Psoas muscle (tissue), 8 donors: ENCODE measurements at regions of chr3 and their contacts with region 1.

Region 1: DNA sequence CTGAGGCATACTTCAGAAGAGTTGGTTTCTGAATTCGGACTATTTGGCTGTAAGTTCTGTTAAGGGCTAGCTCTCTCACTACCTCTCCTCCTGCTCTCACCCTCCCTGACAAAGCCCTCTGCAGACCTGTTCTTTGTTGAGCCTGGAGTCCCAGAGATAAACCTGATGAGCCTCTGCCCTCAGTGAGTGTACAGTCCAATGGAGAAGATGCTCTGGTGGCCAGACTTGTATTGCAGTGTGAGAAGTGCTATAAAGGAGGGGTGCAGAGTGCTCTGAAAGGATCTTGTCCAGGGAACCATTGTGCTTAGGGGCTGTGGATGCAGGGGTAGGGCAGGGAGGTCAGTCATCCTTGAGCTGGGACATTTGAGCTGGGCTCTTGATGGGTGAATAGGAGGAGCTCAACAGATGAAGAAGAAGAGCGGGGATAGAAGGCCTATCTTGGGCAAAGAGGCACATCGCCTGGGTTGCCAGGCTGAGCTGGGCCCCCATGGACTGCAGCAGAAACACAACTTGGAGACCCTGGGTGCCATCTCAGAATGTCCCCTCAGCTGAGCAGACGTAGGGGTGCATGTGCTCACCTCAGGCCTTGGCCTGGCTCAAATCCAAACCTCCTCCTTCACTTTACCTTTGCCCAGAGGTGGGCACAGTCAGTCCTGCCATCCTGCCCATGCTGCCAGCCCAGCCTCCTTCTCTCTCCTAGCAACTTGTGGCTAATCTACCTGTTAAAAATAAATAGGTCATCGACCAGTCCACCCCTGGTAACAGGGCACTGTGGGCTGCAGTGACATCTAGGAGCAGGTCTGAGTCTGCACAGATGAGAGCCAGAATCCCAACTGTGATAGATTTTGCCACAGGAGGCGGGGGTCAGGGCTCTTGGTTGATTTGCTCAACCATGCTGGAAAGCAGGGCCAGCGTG is 3.3 kb downstream of the CAND2 start:
- DNase-seq: no peak
- ATAC-seq: no peak
- H3K4me3 ChIP-seq: peak overlapping the region; percentile 84
- H3K27ac ChIP-seq: peak overlapping the region; percentile 95
- H3K4me1 ChIP-seq: peaks cover 39% of the 10 kb centered on the region
- H3K27me3 ChIP-seq: no peaks in the 10 kb centered on the region
- CTCF ChIP-seq: no peak

Region 2: DNA sequence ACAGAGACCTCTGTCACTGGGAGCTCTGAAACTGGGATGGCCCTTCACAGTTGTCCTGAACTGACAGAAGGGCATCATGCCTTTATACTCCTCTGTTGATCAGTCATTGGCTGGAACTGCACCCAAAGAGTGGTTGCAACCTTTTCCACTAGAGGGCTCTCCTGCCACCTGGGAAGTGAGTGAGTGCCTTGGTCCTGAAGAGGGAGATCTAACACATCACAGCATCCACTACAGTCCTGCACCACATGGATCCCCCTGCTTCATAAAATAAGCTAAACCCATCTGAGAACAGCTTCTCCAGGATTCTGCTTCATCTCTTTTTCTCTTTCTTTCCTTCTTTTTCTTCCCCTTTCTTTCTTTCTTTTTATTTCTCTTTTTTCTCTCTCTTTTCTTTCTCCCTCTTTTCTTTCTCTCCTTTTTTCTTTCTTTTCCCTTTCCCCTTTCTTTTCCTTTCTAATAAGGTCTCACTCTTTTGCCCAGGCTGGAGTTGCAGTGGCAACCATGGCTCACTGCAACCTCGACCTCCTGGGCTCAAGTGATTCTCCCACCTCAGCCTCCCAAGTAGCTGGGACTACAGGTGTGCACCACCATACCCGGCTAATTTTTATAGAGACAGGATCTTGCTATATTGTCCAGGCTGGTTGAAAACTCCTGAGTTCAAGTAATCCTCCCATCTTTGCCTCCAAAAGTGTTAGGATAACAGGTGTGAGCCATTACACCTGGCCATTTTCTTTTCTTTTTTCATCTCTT is 93.1 kb before region 1 on chr3:
- intact Hi-C with region 1: loop called in 1 of 2 experiments (anchors 2 kb)
- DNase-seq: peak; percentile 31 to 58
- ATAC-seq: peak; percentile 84 to 93 (median 87)
- H3K4me3 ChIP-seq: no peak overlapping the region
- H3K27ac ChIP-seq: peak overlapping the region; percentile 21
- H3K4me1 ChIP-seq: peaks cover 11% of the 10 kb centered on the region
- H3K27me3 ChIP-seq: no peaks in the 10 kb centered on the region
- CTCF ChIP-seq: peak; percentile 80

Region 3: DNA sequence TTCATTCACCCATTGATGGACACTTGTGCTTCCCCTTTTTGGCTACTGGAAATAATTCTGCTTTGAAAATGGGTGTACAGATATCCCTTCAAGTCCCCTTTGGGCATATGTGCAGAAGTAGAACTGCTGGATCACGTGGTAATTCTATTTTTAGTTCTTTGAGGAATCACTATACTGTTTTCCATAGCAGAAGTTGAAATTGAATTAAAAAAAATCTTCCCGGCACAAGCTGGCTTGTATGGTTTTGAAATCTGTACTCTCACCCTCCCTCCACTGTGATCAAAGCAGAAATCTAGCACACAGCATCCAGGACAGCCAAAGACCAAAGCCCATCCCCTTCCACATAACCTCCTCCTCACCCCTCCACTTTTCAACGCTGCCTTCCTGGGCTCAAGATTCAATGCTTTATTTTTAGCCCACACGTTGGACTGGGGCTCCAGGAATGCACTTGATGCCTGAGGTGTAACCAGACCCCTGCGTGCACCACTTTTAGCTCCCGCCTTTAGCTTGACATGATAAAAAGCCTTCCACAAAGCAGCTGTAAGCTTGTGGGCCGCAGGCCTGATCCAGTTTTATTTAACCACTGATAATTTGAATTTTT is 70.6 kb before region 1 on chr3:
- intact Hi-C with region 1: loop called in 1 of 2 experiments (anchors 2 kb)
- DNase-seq: peak; percentile 47 to 78
- ATAC-seq: peak; percentile 95 to 98 (median 96)
- H3K4me3 ChIP-seq: peak overlapping the region; percentile 3
- H3K27ac ChIP-seq: peak overlapping the region; percentile 88
- H3K4me1 ChIP-seq: peaks cover 22% of the 10 kb centered on the region
- H3K27me3 ChIP-seq: no peaks in the 10 kb centered on the region
- CTCF ChIP-seq: no peak

Region 4: GRCh38 chr3:12750223-12750622 is 49.6 kb before region 1 on chr3:
- intact Hi-C with region 1: loop called in 1 of 2 experiments (anchors 2 kb)
- DNase-seq: peak in 1 of 2 donors; percentile 45
- ATAC-seq: peak; percentile 60 to 81 (median 75)
- H3K4me3 ChIP-seq: no peak overlapping the region
- H3K27ac ChIP-seq: peak overlapping the region; percentile 88
- H3K4me1 ChIP-seq: peaks cover 28% of the 10 kb centered on the region
- H3K27me3 ChIP-seq: no peaks in the 10 kb centered on the region
- CTCF ChIP-seq: no peak